Left ventricle myocardium superior (tissue), 1 donor: ENCODE measurements at regions of chr7 and their contacts with region 1.

Region 1: GRCh38 chr7:94907026-94907810 is at the start of gene PPP1R9A:
- DNase-seq: peak; percentile 65
- ATAC-seq: peak; percentile 89
- total RNA-seq, gene PPP1R9A: 26.0 TPM

Region 2: GRCh38 chr7:94856643-94857042 is 50.6 kb before region 1 on chr7:
- intact Hi-C with region 1: no loop called
- DNase-seq: no peak
- ATAC-seq: no peak

Region 3: DNA sequence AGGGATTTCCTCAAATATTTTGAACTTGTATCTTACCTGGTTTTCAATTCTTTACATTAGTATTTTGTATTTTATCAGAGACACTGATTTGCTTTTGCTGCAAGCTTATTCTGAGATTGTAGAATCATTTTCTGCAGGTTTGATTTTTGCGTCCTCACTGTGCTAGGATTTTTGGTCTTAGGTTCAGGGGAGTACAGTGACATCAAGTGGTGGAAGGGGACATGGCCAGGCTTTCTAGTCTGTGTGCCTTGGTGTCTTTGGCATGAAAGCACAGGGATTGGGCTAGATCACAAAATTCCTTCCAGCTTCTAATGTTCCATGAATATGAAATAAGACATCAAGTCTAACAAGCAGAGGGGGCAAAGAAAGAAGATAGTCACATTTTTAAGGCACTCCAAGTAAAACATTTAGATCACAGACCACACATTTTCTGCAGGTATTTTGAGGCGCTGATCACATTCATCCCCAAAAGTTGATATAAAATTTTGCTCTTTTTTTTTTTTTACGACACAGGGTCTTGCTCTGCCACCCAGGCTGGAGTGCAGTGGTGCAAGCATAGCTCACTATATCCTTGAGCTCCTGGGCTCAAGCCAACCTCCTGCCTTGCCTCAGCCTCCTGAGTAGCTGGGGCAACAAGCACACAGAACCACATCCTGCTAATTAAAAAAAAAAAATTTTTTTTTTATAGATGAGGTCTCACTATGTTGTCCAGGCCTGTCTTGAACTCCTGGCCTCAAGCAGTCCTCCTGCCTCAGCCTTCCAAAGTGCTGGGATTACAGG is 292.8 kb after region 1 on chr7:
- intact Hi-C with region 1: loop called (anchors 10 kb)
- DNase-seq: peak; percentile 30
- ATAC-seq: peak; percentile 81

Region 4: DNA sequence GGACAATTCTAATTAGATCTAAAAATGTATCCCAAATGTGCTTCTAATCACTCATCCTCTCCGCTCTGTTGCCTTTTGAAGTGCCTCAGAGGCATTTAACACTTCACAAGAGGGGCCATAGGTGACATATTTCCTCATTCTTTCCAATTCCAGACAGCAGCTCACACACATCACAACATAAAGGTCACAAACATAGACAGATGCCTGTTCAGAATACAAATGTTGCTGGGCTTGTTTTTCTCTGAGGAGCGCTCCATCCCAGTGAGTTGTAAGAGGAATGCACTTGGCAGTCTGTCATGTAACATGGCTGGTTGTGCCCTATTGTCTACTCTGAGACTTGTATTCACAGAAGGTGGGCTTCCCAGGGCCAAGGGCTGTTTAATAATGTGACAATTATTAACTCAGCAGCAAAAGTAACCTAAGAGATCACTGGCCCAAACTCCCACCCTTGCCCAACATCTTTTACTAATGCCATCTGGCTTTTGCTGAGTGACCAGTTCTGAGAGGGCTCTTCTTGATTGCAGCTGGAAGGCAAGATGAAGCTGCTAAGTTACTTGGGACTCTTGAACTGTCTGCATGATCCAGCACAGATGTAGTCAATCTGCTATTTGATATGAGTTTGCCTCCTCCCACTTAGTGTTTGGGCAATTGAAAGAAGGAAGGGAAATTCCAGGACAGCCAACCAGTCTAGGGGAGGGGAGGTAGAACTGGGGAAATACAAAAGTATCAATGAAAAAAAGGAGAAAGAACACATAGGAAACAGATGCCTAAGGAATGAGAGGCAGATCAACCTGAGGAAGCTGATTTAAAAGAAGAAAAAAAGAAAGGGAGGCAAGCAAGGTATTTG is 514.0 kb after region 1 on chr7:
- intact Hi-C with region 1: no loop called
- DNase-seq: no peak
- ATAC-seq: no peak